ENCODE measurements at regions of chr3 and their contacts with region 1.

Region 1: DNA sequence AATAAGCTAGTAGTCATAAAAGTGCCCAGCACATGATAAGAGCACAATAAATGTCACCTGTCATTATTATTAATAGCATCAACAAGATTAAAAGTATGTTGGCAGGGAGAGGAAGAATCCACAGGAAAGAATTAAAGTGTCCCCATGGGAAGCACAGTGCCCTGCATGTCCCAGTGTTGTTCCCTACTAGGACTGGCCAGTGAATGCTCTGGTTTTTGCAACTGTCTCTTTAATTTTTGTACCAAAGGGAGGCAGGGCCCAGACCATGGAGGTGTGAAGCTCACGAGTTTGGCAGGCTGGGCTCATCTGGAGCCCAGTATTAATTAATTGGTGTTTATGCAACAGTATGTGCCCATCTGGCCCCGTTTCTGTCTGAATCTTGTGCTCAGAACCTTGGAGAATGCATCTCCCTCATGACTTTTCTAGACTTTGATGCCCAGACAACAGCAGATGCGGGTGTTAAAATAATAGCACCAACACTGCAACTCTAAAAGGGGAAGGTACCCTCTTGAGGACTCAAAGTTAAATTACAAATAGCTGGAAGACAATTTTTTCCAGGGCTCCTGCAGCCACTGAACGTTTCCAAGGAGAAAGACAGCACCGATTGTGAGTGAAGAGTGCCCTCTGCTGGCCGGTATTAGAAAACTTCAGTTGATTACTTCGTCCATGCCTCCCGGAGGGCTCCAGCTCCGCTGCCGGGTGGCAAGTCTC is 71.9 kb upstream of the SPATA12 start:
- DNase-seq: no peak
- H3K4me3 ChIP-seq: no peak overlapping the region
- CTCF ChIP-seq: peak; percentile 65

Region 2: GRCh38 chr3:56573501-56573900 is 415.1 kb before region 1 on chr3:
- CTCF ChIA-PET with region 1: no interaction called
- POLR2A ChIA-PET with region 1: no interaction called
- DNase-seq: no peak
- H3K4me3 ChIP-seq: no peak overlapping the region
- CTCF ChIP-seq: no peak

Region 3: GRCh38 chr3:56677286-56677685 is 311.3 kb before region 1 on chr3:
- CTCF ChIA-PET with region 1: interaction called, 12 read pairs
- POLR2A ChIA-PET with region 1: no interaction called
- DNase-seq: no peak
- H3K4me3 ChIP-seq: no peak overlapping the region
- CTCF ChIP-seq: no peak

Region 4: GRCh38 chr3:56702490-56703315 is 285.9 kb before region 1 on chr3:
- CTCF ChIA-PET with region 1: interaction called, 376 read pairs
- POLR2A ChIA-PET with region 1: interaction called, 4 read pairs
- DNase-seq: peak; percentile 41
- H3K4me3 ChIP-seq: no peak overlapping the region
- CTCF ChIP-seq: peak; percentile 58

Region 5: GRCh38 chr3:56812754-56813650 is 175.6 kb before region 1 on chr3:
- CTCF ChIA-PET with region 1: interaction called, 19 read pairs
- POLR2A ChIA-PET with region 1: no interaction called
- DNase-seq: no peak
- H3K4me3 ChIP-seq: no peak overlapping the region
- CTCF ChIP-seq: no peak

Region 6: DNA sequence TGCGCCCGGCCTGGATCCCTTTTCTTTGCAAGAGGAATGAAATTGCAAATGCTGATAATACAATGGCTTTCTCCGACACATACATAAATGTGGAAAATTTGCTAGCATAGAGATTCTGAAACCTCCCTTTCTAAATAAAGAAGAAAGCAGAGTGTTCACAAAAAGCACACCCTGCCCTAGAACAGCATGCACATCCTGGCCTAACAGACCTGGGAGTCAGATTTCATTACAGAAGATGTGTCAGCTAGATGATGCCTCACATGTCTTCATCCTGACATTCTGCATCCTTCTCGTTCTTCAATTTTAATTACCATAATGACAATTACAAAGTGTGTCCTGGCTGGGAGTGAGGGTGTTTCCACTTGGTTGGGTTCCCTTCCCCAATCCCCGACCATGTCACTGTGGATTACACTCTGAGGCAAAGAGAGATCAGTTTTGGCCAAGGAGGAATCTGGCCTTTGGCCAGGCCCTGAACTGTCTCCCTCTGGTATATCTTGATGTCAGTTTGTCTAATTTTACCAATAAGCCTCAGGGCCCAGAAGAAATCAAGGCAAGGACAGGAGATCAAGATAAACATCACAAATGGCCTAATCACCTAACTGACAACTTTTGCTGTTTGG is 33.0 kb before region 1 on chr3:
- CTCF ChIA-PET with region 1: no interaction called
- POLR2A ChIA-PET with region 1: no interaction called
- DNase-seq: no peak
- H3K4me3 ChIP-seq: no peak overlapping the region
- CTCF ChIP-seq: no peak